OCI-LY7 (cell line): ENCODE measurements at regions of chr1 and their contacts with region 1.

Region 1: GRCh38 chr1:216549796-216550195 is 126.5 kb upstream of the USH2A start:
- DNase-seq: no peak
- H3K4me3 ChIP-seq: no peak overlapping the region
- H3K27ac ChIP-seq: no peak overlapping the region
- H3K4me1 ChIP-seq: no peaks in the 10 kb centered on the region
- CTCF ChIP-seq: no peak

Region 2: GRCh38 chr1:216531263-216532239 is 18.2 kb before region 1 on chr1:
- CTCF ChIA-PET with region 1: no interaction called
- POLR2A ChIA-PET with region 1: interaction called, 10 read pairs
- intact Hi-C with region 1: no loop called
- DNase-seq: no peak
- H3K4me3 ChIP-seq: no peak overlapping the region
- H3K27ac ChIP-seq: no peak overlapping the region
- H3K4me1 ChIP-seq: peaks cover 38% of the 10 kb centered on the region
- CTCF ChIP-seq: no peak